Transverse colon (tissue), 4 donors: ENCODE measurements at regions of chr6 and their contacts with region 1.

Region 1: GRCh38 chr6:85482905-85483700 is 33.2 kb downstream of the NT5E start:
- DNase-seq: peak; percentile 85
- H3K4me3 ChIP-seq: no peak overlapping the region
- H3K27ac ChIP-seq: peak overlapping the region in 2 of 4 donors; percentile 37 to 65
- H3K4me1 ChIP-seq: peaks cover 0 to 7% (median 2%) of the 10 kb centered on the region in 4 donors
- H3K27me3 ChIP-seq: no peaks in the 10 kb centered on the region
- CTCF ChIP-seq: peak; percentile 98 to 100 (median 100)
- EP300 ChIP-seq: no peak
- POLR2A ChIP-seq: no peak

Region 2: DNA sequence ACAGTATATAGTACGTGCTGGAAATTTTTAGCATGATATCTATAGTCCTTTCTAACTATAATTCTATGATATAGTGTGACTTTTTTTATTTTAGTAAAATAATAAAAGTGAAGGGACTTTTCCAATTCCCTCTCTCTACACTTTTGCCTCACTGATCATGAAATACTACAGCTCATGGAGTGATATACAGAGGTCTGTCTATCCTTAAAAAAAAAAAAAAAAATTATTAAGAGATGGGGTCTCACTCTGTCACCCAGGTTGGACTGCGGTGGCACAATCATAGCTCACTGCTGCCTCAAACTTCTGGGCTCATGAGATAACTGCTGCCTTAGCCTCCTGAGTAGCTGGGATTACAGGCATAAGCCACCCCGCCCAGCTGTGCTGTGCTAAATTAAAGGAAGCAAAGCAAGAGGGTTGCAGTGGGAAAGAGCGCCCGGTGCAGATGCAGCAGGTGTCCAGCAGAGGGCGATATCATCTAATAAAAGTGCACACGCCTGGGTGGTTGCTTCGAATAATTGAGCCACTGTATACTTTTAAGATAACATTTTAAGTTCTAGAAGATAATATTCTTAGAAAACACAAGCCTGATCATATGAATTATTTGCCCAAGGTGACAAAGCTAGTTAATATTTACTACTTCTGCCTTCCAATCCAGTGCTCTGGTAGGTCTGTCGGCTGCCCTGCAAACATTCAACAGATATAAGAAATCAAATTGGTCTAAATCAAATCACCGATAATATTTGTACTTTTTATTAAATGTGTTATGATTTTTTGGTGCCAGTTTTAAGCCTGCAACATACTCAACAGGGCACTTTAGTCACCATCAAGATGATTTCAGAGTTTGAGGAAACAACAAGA is 128.1 kb before region 1 on chr6:
- in situ Hi-C with region 1: loop called (anchors 5 to 10 kb)
- intact Hi-C with region 1: loop called (anchors 1 kb)
- DNase-seq: peak; percentile 80
- H3K4me3 ChIP-seq: no peak overlapping the region
- H3K27ac ChIP-seq: no peak overlapping the region
- H3K4me1 ChIP-seq: peaks cover 0 to 5% (median 1%) of the 10 kb centered on the region in 4 donors
- H3K27me3 ChIP-seq: no peaks in the 10 kb centered on the region
- CTCF ChIP-seq: peak; percentile 95 to 97 (median 96)
- EP300 ChIP-seq: no peak
- POLR2A ChIP-seq: no peak

Region 3: GRCh38 chr6:85360794-85361642 is 122.1 kb before region 1 on chr6:
- in situ Hi-C with region 1: loop called in 2 of 4 experiments (anchors 5 to 10 kb)
- intact Hi-C with region 1: no loop called
- DNase-seq: peak; percentile 11
- H3K4me3 ChIP-seq: no peak overlapping the region
- H3K27ac ChIP-seq: peak overlapping the region; percentile 14 to 43 (median 32)
- H3K4me1 ChIP-seq: peaks cover 0 to 17% (median 4%) of the 10 kb centered on the region in 4 donors
- H3K27me3 ChIP-seq: no peaks in the 10 kb centered on the region
- CTCF ChIP-seq: no peak
- EP300 ChIP-seq: no peak
- POLR2A ChIP-seq: no peak